ENCODE measurements at regions of chr1 and their contacts with region 1.

Region 1: DNA sequence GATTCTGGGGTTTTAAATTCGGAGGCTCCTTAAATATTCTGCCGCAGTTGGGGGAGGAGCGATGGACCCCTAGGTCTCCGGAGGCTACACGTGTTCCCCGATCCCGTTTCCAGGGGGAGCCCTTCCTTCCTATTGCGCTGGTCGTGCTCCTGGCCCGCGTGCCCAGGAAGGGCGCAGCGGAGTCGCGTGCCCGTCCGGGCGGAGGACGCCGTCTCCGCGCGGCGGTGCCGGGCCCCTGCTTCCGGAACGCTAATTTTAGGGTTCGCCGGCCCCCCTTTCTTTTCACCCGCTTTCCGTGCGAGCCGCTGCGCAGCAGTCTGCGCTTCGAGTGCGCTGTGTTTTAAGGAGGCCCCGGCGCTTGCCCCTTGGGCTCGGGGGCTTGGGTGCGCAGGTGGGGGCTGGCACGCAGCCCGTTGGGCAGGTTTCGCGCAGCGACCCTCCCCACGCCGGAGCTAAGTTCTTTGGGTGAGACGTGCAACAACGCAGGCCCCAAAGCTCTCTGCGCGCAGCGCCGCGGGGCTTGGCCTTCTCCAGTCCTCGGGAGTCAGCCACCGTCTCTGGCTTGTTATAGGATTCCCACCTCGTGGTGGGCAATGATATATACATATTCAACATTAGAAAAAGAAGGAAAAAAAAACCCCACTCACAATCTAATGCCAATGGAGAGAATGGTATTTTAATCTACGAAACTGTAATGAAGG is 43.5 kb upstream of the DNAJC6 start:
- DNase-seq: peak; percentile 80
- ATAC-seq: peak; percentile 92
- H3K4me3 Mint-ChIP-seq: peak overlapping the region; percentile 93
- H3K27ac Mint-ChIP-seq: no peak overlapping the region; the same call in 1 of the 2 replicates
- H3K4me1 Mint-ChIP-seq: peaks cover 33% of the 10 kb centered on the region
- H3K27me3 Mint-ChIP-seq: peaks cover 12% of the 10 kb centered on the region
- CTCF ChIP-seq: no peak

Region 2: GRCh38 chr1:65229754-65230339 is 36.0 kb before region 1 on chr1:
- CTCF ChIA-PET with region 1: no interaction called
- POLR2A ChIA-PET with region 1: no interaction called
- DNase-seq: no peak
- ATAC-seq: peak; percentile 55
- H3K4me3 Mint-ChIP-seq: no peak overlapping the region
- H3K27ac Mint-ChIP-seq: peak overlapping the region; percentile 22
- H3K4me1 Mint-ChIP-seq: peaks cover 14% of the 10 kb centered on the region
- H3K27me3 Mint-ChIP-seq: no peaks in the 10 kb centered on the region
- CTCF ChIP-seq: no peak

Region 3: DNA sequence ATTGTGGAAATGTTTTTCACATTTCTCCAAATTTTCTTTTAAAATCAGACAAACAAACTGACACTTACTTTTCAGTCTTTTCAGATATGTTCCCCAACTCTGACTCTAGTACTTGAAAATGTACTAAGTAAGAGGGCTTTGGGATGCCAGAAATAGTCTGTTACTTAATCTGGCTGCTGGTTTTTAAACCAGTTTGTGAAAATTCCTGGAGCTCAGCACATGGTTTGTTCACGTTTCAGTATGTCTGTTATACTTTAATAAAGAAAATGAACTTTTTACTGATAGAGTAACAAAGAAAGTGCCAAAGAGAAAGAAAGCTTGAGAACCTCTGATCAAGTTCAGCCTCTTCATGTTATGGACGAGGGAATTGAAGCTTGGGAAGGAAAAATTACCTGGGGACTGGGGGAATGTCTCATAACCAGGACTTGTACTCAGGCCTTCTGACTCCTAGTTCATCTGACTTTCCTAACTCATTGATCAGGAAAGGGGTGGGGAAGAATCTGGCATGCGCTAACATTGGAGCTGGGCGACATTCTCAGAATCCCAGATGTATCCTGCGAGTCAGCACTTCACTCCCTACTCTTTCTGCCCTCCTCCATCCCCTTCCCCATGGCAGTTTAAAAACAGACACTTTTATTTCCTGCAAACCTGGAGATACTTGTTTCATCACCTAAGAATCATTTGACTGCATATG is 12.7 kb after region 1 on chr1:
- CTCF ChIA-PET with region 1: interaction called, 28 read pairs
- POLR2A ChIA-PET with region 1: no interaction called
- DNase-seq: no peak
- ATAC-seq: peak; percentile 65
- H3K4me3 Mint-ChIP-seq: peak overlapping the region; percentile 69
- H3K27ac Mint-ChIP-seq: peak overlapping the region; percentile 59; the same call in 1 of the 2 replicates
- H3K4me1 Mint-ChIP-seq: peaks cover 65% of the 10 kb centered on the region
- H3K27me3 Mint-ChIP-seq: no peaks in the 10 kb centered on the region; the same call in none of the 2 replicates
- CTCF ChIP-seq: no peak

Measured in WTC11 (cell line).